ENCODE measurements at regions of chr5 and their contacts with region 1.

Region 1: GRCh38 chr5:138932171-138932810 is 57.2 kb upstream of the LRRTM2 start:
- DNase-seq: no peak
- H3K4me3 ChIP-seq: no peak overlapping the region
- H3K27ac ChIP-seq: no peak overlapping the region
- H3K4me1 ChIP-seq: peaks cover 7% of the 10 kb centered on the region
- H3K27me3 ChIP-seq: no peaks in the 10 kb centered on the region
- CTCF ChIP-seq: no peak
- POLR2A ChIP-seq: no peak

Region 2: GRCh38 chr5:139137702-139138101 is 205.4 kb after region 1 on chr5:
- CTCF ChIA-PET with region 1: no interaction called
- POLR2A ChIA-PET with region 1: no interaction called
- dilution Hi-C with region 1: no loop called
- intact Hi-C with region 1: loop called (anchors 5 kb)
- DNase-seq: peak; percentile 51
- H3K4me3 ChIP-seq: no peak overlapping the region
- H3K27ac ChIP-seq: no peak overlapping the region
- H3K4me1 ChIP-seq: peaks cover 11% of the 10 kb centered on the region
- H3K27me3 ChIP-seq: no peaks in the 10 kb centered on the region
- CTCF ChIP-seq: peak; percentile 24 to 38
- POLR2A ChIP-seq: no peak

Region 3: DNA sequence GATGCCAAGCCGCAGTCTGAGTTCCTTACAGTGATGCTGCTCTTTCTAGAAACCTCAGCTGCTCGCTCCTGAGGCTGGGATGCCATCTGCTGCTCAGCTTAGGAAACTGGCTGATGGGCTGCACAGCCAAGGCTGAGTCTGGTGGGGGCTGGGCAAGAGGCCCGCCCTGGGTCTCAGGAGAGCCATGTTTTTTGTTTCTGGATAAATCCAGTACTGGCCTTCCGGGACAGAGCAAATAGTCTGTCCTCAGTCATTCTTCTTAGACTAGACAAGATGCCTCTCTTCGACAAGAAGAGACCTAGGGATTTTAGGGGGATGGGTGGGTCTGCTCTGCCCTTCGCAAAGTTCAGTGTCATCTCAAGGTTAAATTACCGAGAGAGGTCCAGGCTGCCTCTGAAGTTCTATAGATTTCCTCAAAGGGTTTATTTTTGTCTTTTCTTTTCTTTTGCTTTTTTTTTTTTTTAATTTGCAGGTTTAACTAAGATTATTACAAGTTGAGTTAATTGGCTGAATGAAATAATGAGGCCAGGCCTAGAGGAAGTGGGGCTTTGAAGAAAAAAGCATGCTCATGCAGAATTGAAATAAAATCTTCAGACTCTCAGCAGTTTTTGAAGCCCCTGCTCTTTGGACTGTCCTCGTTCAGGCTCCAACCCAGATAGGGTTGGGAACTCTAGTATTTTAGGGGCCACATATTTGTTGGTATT is 330.6 kb after region 1 on chr5:
- CTCF ChIA-PET with region 1: no interaction called
- POLR2A ChIA-PET with region 1: no interaction called
- dilution Hi-C with region 1: no loop called
- intact Hi-C with region 1: loop called (anchors 5 kb)
- DNase-seq: peak; percentile 87
- H3K4me3 ChIP-seq: no peak overlapping the region
- H3K27ac ChIP-seq: no peak overlapping the region
- H3K4me1 ChIP-seq: no peaks in the 10 kb centered on the region
- H3K27me3 ChIP-seq: peaks cover 2 to 10% of the 10 kb centered on the region in 2 experiments
- CTCF ChIP-seq: peak; percentile 87 to 88
- POLR2A ChIP-seq: no peak

Measured in endothelial cell of umbilical vein (primary cell).